Activated CD4-positive, alpha-beta T cell treated with anti-CD3 and anti-CD28 coated beads, Interleukin-2, amount 10 ng/mL, durations not matched to agents 24 days and 14 days (primary cell): ENCODE measurements at regions of chr6 and their contacts with region 1.

Region 1: DNA sequence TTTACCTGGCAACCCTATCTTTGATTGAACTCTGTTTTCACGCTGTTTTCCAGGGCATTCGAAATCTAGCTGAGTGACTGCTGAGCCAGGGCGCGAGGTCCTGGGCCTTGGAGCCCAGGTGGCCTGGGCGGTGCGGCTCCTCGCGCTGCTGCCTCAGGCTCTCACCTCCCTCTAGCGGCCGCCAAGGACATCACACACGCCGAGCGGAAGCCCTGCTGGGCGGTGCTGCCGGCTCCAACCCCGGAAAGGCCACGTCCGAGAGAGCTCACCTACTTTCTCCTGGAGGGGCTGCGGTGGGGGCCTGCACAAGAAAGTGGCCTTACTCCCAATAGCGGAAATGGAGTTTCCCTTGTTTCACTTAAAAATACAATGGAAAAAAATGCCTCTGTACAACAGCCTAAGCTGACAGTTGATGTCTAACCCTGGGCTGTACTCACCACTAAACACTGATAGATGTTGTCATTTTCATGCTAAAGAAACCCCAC is 77.7 kb downstream of the ELOVL4 start:
- DNase-seq: peak; percentile 95
- H3K4me3 Mint-ChIP-seq: peak overlapping the region; percentile 67
- H3K27ac Mint-ChIP-seq: peak overlapping the region; percentile 37
- H3K4me1 Mint-ChIP-seq: peaks cover 10% of the 10 kb centered on the region
- H3K27me3 Mint-ChIP-seq: peaks cover 13% of the 10 kb centered on the region

Region 2: DNA sequence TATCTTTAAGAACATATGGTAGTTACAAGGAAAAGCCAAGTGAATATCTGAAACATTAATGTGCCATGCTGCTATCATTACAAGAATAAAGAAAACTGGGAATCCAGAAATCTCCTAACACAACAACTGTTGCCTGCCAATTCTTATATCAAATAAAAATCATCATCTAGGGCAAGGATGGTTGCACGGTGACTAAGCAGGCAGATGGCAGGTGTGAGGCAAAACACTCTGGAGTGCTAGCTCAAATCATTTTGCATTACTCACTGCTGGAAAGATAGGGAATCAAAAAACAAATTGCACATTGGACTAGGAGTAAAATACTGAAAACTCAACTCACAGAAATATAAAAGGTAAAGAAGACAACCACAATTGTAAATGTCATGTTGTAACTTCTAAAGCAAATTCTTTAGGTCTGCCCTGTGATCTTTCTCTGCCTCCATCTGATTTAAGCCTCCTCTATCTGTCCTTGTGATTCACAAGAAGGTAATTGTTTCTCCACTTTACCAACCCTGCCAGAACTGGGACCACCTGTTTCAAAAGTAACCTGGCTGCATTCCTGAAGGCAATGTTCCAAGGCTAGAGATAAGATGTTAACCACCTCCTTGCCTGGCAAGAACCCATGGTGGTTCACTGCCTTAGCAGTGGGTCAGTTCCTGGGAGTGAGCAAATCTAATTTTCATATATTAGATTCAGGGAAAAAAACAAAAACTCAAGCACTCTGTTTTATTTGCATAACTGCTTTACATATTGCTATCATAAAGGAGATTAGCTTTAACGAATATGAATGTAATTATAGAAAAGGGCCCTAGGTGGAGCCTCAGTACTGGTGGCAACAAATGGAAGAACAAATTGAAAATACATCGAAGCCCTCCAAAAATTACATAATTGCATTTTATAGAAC is 299.3 kb before region 1 on chr6:
- intact Hi-C with region 1: loop called (anchors 5 kb)
- DNase-seq: no peak
- H3K4me3 Mint-ChIP-seq: no peak overlapping the region
- H3K27ac Mint-ChIP-seq: no peak overlapping the region
- H3K4me1 Mint-ChIP-seq: no peaks in the 10 kb centered on the region
- H3K27me3 Mint-ChIP-seq: peaks cover 7% of the 10 kb centered on the region

Region 3: GRCh38 chr6:79630883-79631692 is 238.6 kb before region 1 on chr6 and contains the start of gene SH3BGRL2:
- intact Hi-C with region 1: no loop called
- DNase-seq: peak; percentile 66
- H3K4me3 Mint-ChIP-seq: peak within 1 kb of the TSS; percentile 84
- H3K27ac Mint-ChIP-seq: no peak within 1 kb of the TSS
- H3K4me1 Mint-ChIP-seq: peaks cover 6% of the 10 kb centered on the region
- H3K27me3 Mint-ChIP-seq: peaks cover 63% of the 10 kb centered on the region
- total RNA-seq, gene SH3BGRL2: 0.07 and 0.14 TPM in 2 replicates

Region 4: DNA sequence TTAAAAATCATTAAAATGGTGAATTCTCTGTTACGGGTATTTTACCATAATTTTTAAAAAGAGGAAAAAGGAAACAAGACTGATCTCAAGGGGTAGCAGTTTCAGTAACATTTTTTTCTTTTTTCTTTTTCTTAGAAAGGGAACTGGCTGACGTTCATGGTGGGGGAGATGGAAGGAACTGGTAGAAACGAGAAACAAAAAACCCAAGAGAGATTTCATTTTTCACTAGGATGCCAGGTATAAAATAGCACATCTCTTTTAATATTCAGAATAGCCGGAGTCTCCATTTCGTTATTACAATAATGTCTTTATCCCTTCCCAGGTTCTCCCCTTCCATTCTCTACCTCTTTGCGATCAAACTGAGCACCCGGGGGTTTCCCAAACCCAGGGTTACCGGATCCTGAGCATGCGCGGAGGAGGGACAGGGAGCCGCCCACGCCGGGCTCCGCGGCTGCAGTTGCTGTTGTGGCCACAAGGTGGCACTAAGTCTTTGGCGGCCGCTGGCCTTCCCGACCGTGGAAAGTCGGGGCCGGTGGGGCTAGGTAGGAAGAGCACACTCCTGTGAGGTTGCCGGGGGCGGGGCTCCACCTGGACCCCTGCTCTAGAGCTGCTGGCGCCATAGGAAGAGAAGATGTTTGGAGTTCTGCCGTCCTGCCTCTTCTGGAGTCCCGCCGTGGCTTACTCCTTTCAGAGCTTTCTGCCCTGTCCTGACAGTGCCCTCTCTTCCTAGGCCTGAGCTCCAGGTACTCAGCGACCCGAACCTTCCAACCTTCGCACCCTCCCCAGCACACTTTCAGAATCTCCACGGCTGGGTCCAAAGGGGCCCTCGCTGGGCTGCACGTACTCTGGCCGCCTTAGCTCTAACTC is 91.7 kb before region 1 on chr6:
- intact Hi-C with region 1: loop called (anchors 1 kb)
- DNase-seq: peak; percentile 97
- H3K4me3 Mint-ChIP-seq: peak overlapping the region; percentile 79
- H3K27ac Mint-ChIP-seq: peak overlapping the region; percentile 57
- H3K4me1 Mint-ChIP-seq: peaks cover 9% of the 10 kb centered on the region
- H3K27me3 Mint-ChIP-seq: no peaks in the 10 kb centered on the region

Region 5: GRCh38 chr6:79949233-79949632 is 79.6 kb after region 1 on chr6:
- intact Hi-C with region 1: loop called (anchors 5 kb)
- DNase-seq: peak; percentile 89
- H3K4me3 Mint-ChIP-seq: no peak overlapping the region
- H3K27ac Mint-ChIP-seq: no peak overlapping the region
- H3K4me1 Mint-ChIP-seq: peaks cover 18% of the 10 kb centered on the region
- H3K27me3 Mint-ChIP-seq: peaks cover 45% of the 10 kb centered on the region

Region 6: DNA sequence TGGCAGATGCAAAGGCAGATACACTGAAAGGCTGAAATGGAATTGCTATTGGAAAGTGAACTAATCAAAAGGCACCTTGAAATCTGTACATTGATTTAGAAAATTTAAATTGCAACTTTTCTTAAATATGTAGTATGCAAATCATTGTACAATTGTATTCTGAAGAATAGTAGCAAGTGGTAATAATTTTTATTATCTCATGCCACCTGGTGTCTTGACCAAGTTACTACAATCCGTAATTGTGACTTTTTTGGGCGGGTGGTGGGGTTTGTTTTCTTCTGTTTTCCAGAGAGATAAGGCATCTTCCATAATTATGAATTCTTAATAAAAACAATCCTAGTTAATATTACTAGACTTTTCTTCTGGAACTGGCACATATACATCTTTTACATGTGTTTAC is 224.4 kb after region 1 on chr6:
- intact Hi-C with region 1: loop called (anchors 5 kb)
- DNase-seq: peak; percentile 69
- H3K4me3 Mint-ChIP-seq: no peak overlapping the region
- H3K27ac Mint-ChIP-seq: no peak overlapping the region
- H3K4me1 Mint-ChIP-seq: peaks cover 7% of the 10 kb centered on the region
- H3K27me3 Mint-ChIP-seq: peaks cover 30% of the 10 kb centered on the region